ENCODE measurements at regions of chr9 and their contacts with region 1.

Region 1: DNA sequence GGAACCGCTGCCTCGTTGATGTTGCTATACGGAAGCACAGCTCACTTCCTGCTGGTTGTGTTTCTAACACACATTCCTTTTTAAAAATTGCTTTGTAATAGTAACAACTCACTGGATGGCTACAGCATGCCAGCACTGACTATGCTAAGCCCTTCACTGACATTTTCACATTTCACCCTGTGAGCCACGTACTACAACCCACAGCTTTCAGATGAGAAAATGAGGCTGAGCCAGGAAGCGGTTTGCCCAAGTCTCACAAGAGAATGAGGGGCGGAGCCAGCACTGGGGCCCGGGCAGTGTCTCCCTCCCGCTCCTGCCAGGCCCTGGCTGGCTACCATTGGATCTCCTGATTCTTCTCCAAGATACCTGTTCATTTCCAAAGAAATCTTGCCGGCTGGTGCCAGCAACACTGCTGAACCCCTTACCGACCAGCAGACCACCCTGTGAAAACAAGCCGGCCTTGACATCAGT is 38.3 kb downstream of the FAM78A start:
- DNase-seq: peak; percentile 82
- H3K4me3 Mint-ChIP-seq: peak overlapping the region; percentile 58
- H3K27ac Mint-ChIP-seq: peak overlapping the region; percentile 90
- H3K4me1 Mint-ChIP-seq: peaks cover 35% of the 10 kb centered on the region
- H3K27me3 Mint-ChIP-seq: no peaks in the 10 kb centered on the region

Region 2: GRCh38 chr9:131227112-131227958 is 10.6 kb before region 1 on chr9:
- intact Hi-C with region 1: no loop called
- DNase-seq: no peak
- H3K4me3 Mint-ChIP-seq: no peak overlapping the region
- H3K27ac Mint-ChIP-seq: peak overlapping the region; percentile 40
- H3K4me1 Mint-ChIP-seq: peaks cover 5% of the 10 kb centered on the region
- H3K27me3 Mint-ChIP-seq: no peaks in the 10 kb centered on the region

Region 3: GRCh38 chr9:131253891-131254491 is 16.0 kb after region 1 on chr9:
- intact Hi-C with region 1: loop called (anchors 1 kb)
- DNase-seq: no peak
- H3K4me3 Mint-ChIP-seq: no peak overlapping the region
- H3K27ac Mint-ChIP-seq: peak overlapping the region; percentile 29
- H3K4me1 Mint-ChIP-seq: peaks cover 46% of the 10 kb centered on the region
- H3K27me3 Mint-ChIP-seq: no peaks in the 10 kb centered on the region

Region 4: GRCh38 chr9:131747356-131747755 is 509.4 kb after region 1 on chr9:
- intact Hi-C with region 1: loop called (anchors 1 kb)
- DNase-seq: no peak
- H3K4me3 Mint-ChIP-seq: no peak overlapping the region
- H3K27ac Mint-ChIP-seq: no peak overlapping the region
- H3K4me1 Mint-ChIP-seq: peaks cover 34% of the 10 kb centered on the region
- H3K27me3 Mint-ChIP-seq: peaks cover 5% of the 10 kb centered on the region

Measured in activated T-helper 1 cell treated with anti-CD3 and anti-CD28 coated beads, Interleukin-12 subunit alpha, Interleukin-12 subunit beta, Interleukin-2, Interleukin-4 antibody, amounts not matched to agents 30 ng/mL and 10 ng/mL and 1 ng/mL, durations not matched to agents 14 hours and 24 hours and 36 hours (primary cell).